Heart right ventricle (tissue), 16 donors: ENCODE measurements at regions of chr5 and their contacts with region 1.

Region 1: GRCh38 chr5:54217826-54218503 is 92.4 kb downstream of the ARL15 start:
- DNase-seq: peak in 1 of 2 donors; percentile 57
- ATAC-seq: peak in 7 of 8 donors; percentile 79 to 88 (median 85)
- H3K4me3 ChIP-seq: no peak overlapping the region
- H3K27ac ChIP-seq: no peak overlapping the region
- H3K4me1 ChIP-seq: peaks cover 0 to 57% (median 27%) of the 10 kb centered on the region in 9 donors
- H3K27me3 ChIP-seq: no peaks in the 10 kb centered on the region
- CTCF ChIP-seq: peak; percentile 66 to 93 (median 81)

Region 2: DNA sequence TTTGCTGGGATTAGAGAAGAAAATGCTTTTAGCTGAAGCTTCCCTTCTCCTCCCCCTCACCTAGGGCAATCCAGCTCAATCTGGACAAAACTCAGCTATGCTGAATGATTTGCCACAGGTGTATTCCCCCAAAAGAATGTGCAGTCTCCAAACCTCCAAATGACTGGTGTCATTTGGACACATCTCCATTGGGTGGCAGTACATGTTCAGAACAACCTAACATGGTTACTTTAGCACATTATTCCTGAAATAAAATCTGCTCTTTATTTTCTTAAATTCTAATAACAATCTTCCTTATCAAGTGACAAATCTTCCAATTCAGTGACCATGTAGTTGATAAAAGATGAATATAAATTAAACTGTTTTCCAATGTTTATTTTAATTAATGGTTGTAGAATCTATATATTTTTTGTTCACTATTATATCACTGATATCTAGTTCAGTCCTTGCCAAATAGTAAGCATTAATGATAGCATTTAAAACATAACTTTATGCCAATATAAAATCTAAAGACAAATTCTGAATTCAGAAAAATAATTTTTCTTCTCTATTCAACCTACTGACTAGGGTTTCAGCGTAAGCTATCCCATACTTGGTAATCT is 1047.1 kb before region 1 on chr5:
- intact Hi-C with region 1: loop called in 6 of 10 experiments (anchors 5 to 10 kb)
- DNase-seq: no peak
- ATAC-seq: peak in 1 of 8 donors; percentile 57
- H3K4me3 ChIP-seq: no peak overlapping the region
- H3K27ac ChIP-seq: no peak overlapping the region
- H3K4me1 ChIP-seq: peaks cover 4 to 29% (median 17%) of the 10 kb centered on the region in 9 donors
- H3K27me3 ChIP-seq: no peaks in the 10 kb centered on the region
- CTCF ChIP-seq: peak in 7 of 9 donors; percentile 46 to 70 (median 61)

Region 3: DNA sequence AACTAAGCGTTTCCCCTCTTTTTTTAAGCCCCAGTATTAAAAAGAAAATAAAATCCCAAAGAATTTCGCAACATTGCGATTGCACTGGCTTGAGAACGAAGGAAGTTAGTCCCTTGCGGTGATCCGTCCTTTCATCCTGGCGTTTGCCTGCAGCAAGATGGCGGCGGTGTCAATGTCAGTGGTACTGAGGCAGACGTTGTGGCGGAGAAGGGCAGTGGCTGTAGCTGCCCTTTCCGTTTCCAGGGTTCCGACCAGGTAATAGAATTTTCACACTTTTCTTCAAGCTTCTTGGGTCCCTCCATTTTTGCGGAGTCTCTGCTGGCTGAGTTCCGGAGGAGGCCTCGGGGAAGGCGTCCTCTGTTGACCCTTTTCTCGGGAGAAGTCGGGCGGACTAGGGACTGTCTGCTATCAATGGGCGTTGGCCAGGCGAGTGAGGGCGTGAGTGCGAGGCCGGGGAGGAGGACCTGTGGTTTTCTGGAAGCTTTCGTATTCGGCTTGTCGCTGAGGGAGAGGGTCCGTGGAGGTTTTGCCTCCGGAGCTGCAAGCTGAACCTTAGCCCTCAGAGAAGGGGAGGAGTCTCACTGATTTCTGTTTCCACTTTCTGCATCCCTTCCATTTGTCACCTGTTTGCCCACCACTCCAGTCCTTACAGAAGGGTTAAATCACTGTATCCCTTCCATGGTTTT is 657.3 kb before region 1 on chr5 and contains the start of gene NDUFS4:
- intact Hi-C with region 1: loop called in 2 of 10 experiments (anchors 10 kb)
- DNase-seq: peak; percentile 77 to 95
- ATAC-seq: peak; percentile 95 to 98 (median 96)
- H3K4me3 ChIP-seq: peak within 1 kb of the TSS; percentile 69 to 96 (median 81)
- H3K27ac ChIP-seq: peak within 1 kb of the TSS; percentile 81 to 97 (median 92)
- H3K4me1 ChIP-seq: peaks cover 4 to 42% (median 25%) of the 10 kb centered on the region in 9 donors
- H3K27me3 ChIP-seq: peaks cover 0 to 21% (median 0%) of the 10 kb centered on the region in 7 donors
- CTCF ChIP-seq: peak in 2 of 9 donors; percentile 23 to 30
- total RNA-seq, gene NDUFS4: 156 to 268 (median 213) TPM

Region 4: DNA sequence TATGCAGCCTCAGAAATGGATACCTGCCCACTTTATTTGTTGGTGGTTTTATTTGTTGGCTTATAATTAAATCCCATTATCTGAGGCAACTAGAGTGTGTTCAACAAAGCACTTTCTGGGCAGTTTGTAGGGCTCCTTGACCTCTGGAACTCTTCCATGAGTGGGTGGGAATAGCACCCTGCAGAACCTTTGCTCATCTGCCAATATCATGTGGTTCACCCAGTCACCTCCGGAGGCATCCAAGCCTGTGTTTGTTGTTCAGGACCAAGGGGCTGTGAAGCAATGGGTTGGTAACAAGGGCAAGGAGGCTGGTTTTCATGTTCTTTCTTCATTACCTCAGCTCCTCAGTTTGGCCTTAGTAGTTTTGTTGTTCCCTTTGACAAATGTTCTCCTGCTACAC is 343.6 kb before region 1 on chr5:
- intact Hi-C with region 1: loop called in 5 of 10 experiments (anchors 10 kb)
- DNase-seq: no peak
- ATAC-seq: no peak
- H3K4me3 ChIP-seq: no peak overlapping the region
- H3K27ac ChIP-seq: no peak overlapping the region
- H3K4me1 ChIP-seq: peaks cover 0 to 8% (median 0%) of the 10 kb centered on the region in 9 donors
- H3K27me3 ChIP-seq: no peaks in the 10 kb centered on the region
- CTCF ChIP-seq: peak in 3 of 9 donors; percentile 17 to 18 (median 17)

Region 5: DNA sequence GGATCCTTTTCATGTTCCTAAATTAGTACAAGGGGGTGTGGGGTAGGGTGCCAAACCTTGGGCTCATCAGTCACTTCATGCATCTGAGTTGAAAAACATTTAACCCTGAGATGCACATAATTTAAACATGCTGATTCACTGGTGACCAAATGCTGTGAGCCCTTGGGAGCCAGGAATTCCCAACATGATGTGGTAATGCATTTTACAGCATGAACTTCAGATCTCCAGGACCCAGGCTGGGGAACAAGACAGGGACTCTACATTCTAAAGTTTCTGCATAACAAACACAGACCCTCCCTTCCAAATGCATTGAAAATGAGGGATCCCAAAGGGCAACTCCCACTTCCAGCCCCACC is 335.3 kb before region 1 on chr5:
- intact Hi-C with region 1: loop called in 6 of 10 experiments (anchors 10 kb)
- DNase-seq: no peak
- ATAC-seq: no peak
- H3K4me3 ChIP-seq: no peak overlapping the region
- H3K27ac ChIP-seq: no peak overlapping the region
- H3K4me1 ChIP-seq: no peaks in the 10 kb centered on the region
- H3K27me3 ChIP-seq: no peaks in the 10 kb centered on the region
- CTCF ChIP-seq: no peak

Region 6: GRCh38 chr5:54062958-54063357 is 155.0 kb before region 1 on chr5:
- intact Hi-C with region 1: no loop called
- DNase-seq: no peak
- ATAC-seq: no peak
- H3K4me3 ChIP-seq: no peak overlapping the region
- H3K27ac ChIP-seq: no peak overlapping the region
- H3K4me1 ChIP-seq: peaks cover 0 to 16% (median 0%) of the 10 kb centered on the region in 9 donors
- H3K27me3 ChIP-seq: no peaks in the 10 kb centered on the region
- CTCF ChIP-seq: no peak

Region 7: DNA sequence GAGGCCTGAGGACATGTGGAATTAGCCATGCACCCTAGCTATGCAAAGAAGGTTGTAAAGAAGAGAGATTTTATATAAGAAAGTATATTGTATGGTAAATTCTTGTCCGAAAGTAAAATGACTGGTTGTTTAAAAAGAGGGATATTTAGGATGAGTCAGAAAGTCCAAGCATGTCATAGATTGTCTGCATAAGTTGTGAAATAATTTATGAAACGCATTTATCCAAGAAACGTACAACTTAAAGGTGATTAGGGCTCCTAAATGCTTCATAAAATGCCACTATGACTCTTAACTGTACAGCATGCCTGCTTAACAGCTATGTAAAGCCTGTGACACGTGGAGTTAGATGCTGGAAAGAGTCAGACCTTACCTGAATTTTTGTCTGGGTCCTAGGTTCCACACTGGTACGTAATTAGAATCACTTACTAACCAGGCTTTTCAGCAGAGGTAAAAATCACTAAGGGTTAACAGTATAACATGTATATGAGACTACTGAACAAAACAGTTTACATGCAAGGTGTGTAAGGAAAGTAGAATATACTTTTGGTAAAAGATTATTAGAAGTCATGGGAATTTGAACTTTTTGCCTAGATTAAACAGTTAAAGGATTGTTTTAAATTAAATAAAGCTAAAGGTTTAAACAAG is 129.4 kb after region 1 on chr5:
- intact Hi-C with region 1: no loop called
- DNase-seq: no peak
- ATAC-seq: no peak
- H3K4me3 ChIP-seq: no peak overlapping the region
- H3K27ac ChIP-seq: no peak overlapping the region
- H3K4me1 ChIP-seq: peaks cover 0 to 8% (median 0%) of the 10 kb centered on the region in 9 donors
- H3K27me3 ChIP-seq: no peaks in the 10 kb centered on the region
- CTCF ChIP-seq: no peak

Region 8: GRCh38 chr5:54480296-54480695 is 262.3 kb after region 1 on chr5:
- intact Hi-C with region 1: no loop called
- DNase-seq: no peak
- ATAC-seq: no peak
- H3K4me3 ChIP-seq: no peak overlapping the region
- H3K27ac ChIP-seq: no peak overlapping the region
- H3K4me1 ChIP-seq: no peaks in the 10 kb centered on the region
- H3K27me3 ChIP-seq: no peaks in the 10 kb centered on the region
- CTCF ChIP-seq: no peak